ENCODE measurements at regions of chr14 and their contacts with region 1.

Region 1: GRCh38 chr14:95361373-95362137 is 41.8 kb upstream of the CLMN start:
- DNase-seq: peak; percentile 36
- H3K4me3 ChIP-seq: no peak overlapping the region
- H3K27ac ChIP-seq: no peak overlapping the region
- H3K4me1 ChIP-seq: no peaks in the 10 kb centered on the region
- H3K27me3 ChIP-seq: peaks cover 0 to 4% of the 10 kb centered on the region in 2 experiments
- CTCF ChIP-seq: peak; percentile 66 to 75
- POLR2A ChIP-seq: no peak

Region 2: GRCh38 chr14:95098984-95099599 is 262.5 kb before region 1 on chr14:
- CTCF ChIA-PET with region 1: interaction called, 8 read pairs
- POLR2A ChIA-PET with region 1: no interaction called
- dilution Hi-C with region 1: no loop called
- intact Hi-C with region 1: loop called (anchors 1 kb)
- DNase-seq: peak; percentile 25
- H3K4me3 ChIP-seq: no peak overlapping the region
- H3K27ac ChIP-seq: no peak overlapping the region
- H3K4me1 ChIP-seq: no peaks in the 10 kb centered on the region
- H3K27me3 ChIP-seq: no peaks in the 10 kb centered on the region
- CTCF ChIP-seq: peak; percentile 38 to 49
- POLR2A ChIP-seq: no peak

Region 3: GRCh38 chr14:95174184-95174792 is 187.3 kb before region 1 on chr14:
- CTCF ChIA-PET with region 1: interaction called, 25 read pairs
- POLR2A ChIA-PET with region 1: no interaction called
- dilution Hi-C with region 1: no loop called
- intact Hi-C with region 1: loop called (anchors 1 kb)
- DNase-seq: peak; percentile 49
- H3K4me3 ChIP-seq: no peak overlapping the region
- H3K27ac ChIP-seq: no peak overlapping the region
- H3K4me1 ChIP-seq: peaks cover 11% of the 10 kb centered on the region
- H3K27me3 ChIP-seq: peaks cover 4 to 6% of the 10 kb centered on the region in 2 experiments
- CTCF ChIP-seq: no peak
- POLR2A ChIP-seq: no peak

Region 4: GRCh38 chr14:95248432-95248831 is 113.1 kb before region 1 on chr14:
- CTCF ChIA-PET with region 1: interaction called, 4 read pairs
- POLR2A ChIA-PET with region 1: no interaction called
- dilution Hi-C with region 1: no loop called
- intact Hi-C with region 1: loop called (anchors 2 kb)
- DNase-seq: no peak
- H3K4me3 ChIP-seq: peak overlapping the region in 1 of 3 experiments; percentile 0
- H3K27ac ChIP-seq: peak overlapping the region; percentile 55
- H3K4me1 ChIP-seq: peaks cover 46% of the 10 kb centered on the region
- H3K27me3 ChIP-seq: no peaks in the 10 kb centered on the region
- CTCF ChIP-seq: no peak
- POLR2A ChIP-seq: no peak

Region 5: GRCh38 chr14:95348395-95349080 is 13.0 kb before region 1 on chr14:
- CTCF ChIA-PET with region 1: interaction called, 20 read pairs
- POLR2A ChIA-PET with region 1: no interaction called
- dilution Hi-C with region 1: no loop called
- intact Hi-C with region 1: no loop called
- DNase-seq: no peak
- H3K4me3 ChIP-seq: no peak overlapping the region
- H3K27ac ChIP-seq: no peak overlapping the region
- H3K4me1 ChIP-seq: no peaks in the 10 kb centered on the region
- H3K27me3 ChIP-seq: no peaks in the 10 kb centered on the region
- CTCF ChIP-seq: no peak
- POLR2A ChIP-seq: no peak